Sciatic nerve (tissue), 2 donors: ENCODE measurements at regions of chr1 and their contacts with region 1.

Region 1: DNA sequence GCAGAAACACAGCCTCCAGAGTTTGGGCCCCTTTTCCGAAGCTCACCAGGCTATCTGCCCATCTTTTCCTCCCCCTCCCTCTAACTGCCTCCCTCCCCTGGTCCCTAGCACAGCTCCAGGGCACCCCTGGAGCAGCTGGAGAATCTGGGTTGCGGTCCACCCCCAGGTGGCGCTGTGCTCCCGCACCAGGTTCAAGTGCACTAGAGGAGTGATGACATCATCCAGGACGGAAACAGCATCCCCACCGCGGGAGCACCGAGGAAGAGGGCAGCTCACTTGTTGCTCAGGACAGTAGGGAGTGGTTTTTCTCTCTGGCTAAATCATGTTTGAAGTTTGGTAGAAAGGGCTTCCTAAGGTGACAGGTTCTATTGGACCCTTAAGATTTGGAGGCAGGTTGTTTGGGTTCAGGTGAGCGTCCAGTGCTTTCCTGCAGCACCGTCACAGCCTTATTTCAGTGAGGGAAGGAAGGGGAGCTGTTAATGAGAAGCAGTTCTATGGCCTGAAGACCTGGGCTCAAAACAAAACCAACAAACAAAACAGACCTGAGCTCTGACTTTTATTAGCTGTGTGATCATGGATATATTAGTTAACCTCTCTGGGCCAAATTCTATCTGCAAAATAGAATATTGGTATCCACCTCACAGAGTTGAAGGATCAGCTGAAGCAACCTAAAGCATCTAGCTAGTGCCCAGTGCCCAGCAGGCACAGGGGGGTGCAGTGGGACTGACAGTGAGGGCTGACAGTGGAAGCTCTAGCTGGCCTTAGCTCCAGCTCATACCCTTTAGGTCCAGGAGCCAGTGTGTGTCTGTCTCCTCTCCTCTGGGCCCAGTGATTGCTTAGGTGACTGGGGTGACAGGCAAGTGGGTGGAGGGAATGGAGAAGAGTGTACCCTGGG is 7.5 kb downstream of the SHISA4 start:
- DNase-seq: peak; percentile 94
- ATAC-seq: peak; percentile 92

Region 2: DNA sequence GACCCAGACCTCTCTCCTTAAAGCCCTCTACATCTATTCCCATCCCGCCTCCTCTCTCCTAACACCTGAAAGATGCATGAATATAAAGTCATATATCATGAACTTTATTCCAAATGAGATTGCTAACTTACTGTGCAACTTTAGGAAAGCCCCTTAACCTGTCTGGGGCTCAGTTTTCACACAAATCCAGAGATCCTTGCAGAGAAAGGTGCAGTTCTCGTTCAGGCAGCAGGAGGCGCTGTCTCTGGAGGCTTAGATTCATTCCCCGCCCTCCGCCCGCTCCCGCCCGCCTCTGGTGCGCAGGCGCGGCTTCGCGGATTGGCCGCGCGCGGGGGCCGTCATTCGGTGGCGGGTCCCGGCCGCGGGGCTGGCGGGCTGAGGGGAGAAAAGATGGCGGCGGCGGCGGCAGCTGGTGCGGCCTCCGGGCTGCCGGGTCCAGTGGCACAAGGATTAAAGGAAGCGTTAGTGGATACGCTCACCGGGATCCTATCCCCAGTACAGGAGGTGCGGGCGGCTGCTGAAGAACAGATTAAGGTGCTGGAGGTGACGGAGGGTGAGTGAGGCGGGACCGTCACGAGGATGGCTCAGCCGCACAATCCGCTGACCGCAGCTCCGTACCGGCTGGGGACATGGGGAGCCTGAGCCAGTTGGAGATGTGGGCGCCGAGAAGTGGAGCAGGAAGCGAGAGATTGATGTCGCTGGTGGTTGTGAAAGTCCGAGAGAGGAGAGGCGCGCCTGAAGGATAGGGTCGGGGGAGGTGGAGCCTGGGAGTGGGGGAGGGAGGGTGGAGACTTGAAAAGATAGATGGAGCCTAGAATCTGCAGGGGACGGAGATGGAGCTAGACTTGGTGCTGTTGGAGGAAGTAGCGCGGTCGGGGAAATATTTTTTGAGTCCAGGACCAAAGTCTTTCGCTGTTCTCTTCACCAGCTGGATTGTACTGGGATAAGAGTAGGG is 67.1 kb before region 1 on chr1 and contains the start of gene IPO9:
- intact Hi-C with region 1: no loop called
- DNase-seq: peak; percentile 96
- ATAC-seq: peak; percentile 97
- total RNA-seq, gene IPO9: 33.0 TPM

Region 3: DNA sequence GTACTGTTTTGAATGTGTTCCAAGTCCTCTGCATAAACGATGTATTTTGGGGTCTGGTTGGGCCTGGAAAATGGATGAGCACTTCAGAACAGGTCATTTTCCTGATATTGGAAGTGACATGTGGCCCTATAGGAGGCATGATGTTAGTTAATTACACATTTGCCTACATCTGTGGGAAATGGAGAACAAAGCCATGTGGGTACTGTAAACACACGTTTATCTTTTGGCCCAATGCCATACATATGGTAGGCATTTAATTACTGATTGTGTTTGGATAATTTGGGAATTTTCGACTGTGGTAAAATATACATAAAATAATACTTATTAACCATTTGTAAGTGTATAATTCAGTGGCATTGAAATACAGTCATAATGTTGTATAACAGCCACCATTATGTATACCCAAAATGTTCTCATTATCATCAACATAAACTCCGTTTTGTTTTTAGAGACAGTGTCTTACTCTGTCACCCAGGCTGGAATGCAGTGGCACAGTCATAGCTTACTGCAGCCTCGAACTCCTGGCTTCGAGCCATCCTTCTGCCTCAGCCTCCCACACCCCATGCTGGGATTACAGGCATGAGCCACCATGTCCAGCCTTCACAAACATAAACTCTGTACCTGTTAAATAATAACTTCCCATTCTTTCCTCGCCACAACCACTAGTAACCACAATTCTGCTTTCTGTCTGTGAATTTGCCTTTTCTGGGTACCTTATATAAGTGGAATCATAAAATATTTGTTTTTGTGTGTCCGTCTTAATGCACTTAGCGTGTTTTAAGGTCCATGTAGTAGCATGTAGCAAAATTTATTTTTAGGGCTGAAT is 74.4 kb after region 1 on chr1:
- intact Hi-C with region 1: loop called (anchors 2 kb)
- DNase-seq: no peak
- ATAC-seq: peak; percentile 39